B cell (primary cell): ENCODE measurements at regions of chr11 and their contacts with region 1.

Region 1: DNA sequence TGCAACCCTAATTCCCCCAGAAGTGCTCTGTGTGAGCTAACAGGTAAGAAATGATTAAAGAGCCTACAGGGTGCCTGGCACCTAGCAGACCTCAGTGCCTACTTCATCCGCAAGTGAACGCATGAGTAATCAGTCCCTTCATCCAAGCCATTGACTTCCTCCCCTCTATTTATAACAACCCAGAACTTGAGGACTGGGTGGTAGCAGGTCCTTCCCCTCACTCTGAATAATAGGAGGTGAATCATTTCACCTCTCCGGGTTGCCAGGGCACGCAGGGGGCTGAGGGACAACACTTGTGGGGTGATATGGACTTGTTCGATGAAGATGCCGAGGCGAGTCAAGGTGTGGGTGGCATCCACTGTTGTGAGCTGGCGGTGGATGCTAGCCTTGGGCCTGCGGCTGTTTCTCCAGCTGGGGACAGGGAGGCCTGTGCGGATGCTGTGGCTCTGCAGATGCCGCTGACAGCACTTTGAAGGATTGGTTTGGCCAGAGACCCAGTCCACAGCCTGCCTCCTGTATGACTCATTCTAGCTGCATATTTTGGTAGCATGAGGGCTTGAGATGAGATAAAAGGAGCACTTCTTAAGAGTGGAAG is 11.7 kb upstream of the SORL1-AS1 start:
- DNase-seq: peak; percentile 36
- ATAC-seq: peak; percentile 31
- H3K4me3 ChIP-seq: no peak overlapping the region
- H3K4me3 Mint-ChIP-seq: peak overlapping the region; percentile 63
- H3K27ac ChIP-seq: peak overlapping the region in 1 of 2 donors; percentile 8
- H3K27ac Mint-ChIP-seq: peak overlapping the region; percentile 62
- H3K4me1 ChIP-seq: peaks cover 65 to 80% of the 10 kb centered on the region in 2 donors
- H3K4me1 Mint-ChIP-seq: peaks cover 90% of the 10 kb centered on the region
- H3K27me3 ChIP-seq: no peaks in the 10 kb centered on the region
- H3K27me3 Mint-ChIP-seq: no peaks in the 10 kb centered on the region
- CTCF ChIP-seq: no peak

Region 2: DNA sequence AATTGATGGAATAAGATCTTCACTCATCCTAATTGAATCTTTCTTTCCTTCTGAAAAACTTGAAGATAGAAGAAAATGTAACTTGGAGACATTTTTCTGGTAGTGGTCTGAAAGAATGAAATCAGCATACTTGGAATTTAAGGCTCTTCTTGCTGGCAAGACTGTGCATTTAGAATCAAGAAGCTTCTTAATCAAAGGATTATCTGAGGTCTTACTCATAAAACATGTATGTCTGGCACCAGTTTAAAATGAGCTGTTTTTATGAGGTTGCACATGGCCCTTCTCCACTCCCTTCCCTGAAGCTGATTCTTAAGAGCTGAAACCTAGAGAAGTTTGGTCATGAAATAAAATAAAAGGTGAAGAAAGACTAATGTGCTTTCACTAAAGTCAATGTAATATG is 1051.0 kb before region 1 on chr11:
- CTCF ChIA-PET with region 1: no interaction called
- POLR2A ChIA-PET with region 1: no interaction called
- intact Hi-C with region 1: no loop called
- DNase-seq: no peak
- ATAC-seq: no peak
- H3K4me3 ChIP-seq: no peak overlapping the region
- H3K4me3 Mint-ChIP-seq: no peak overlapping the region
- H3K27ac ChIP-seq: no peak overlapping the region
- H3K27ac Mint-ChIP-seq: no peak overlapping the region
- H3K4me1 ChIP-seq: no peaks in the 10 kb centered on the region
- H3K4me1 Mint-ChIP-seq: no peaks in the 10 kb centered on the region
- H3K27me3 ChIP-seq: no peaks in the 10 kb centered on the region
- H3K27me3 Mint-ChIP-seq: no peaks in the 10 kb centered on the region
- CTCF ChIP-seq: no peak

Region 3: GRCh38 chr11:120985718-120986569 is 478.5 kb before region 1 on chr11:
- CTCF ChIA-PET with region 1: no interaction called
- POLR2A ChIA-PET with region 1: no interaction called
- intact Hi-C with region 1: no loop called
- DNase-seq: peak; percentile 41
- ATAC-seq: peak; percentile 65
- H3K4me3 ChIP-seq: peak overlapping the region in 3 of 5 experiments; percentile 25 to 48 (median 40)
- H3K4me3 Mint-ChIP-seq: peak overlapping the region; percentile 63
- H3K27ac ChIP-seq: no peak overlapping the region
- H3K27ac Mint-ChIP-seq: no peak overlapping the region
- H3K4me1 ChIP-seq: peaks cover 7 to 8% of the 10 kb centered on the region in 2 donors
- H3K4me1 Mint-ChIP-seq: peaks cover 10% of the 10 kb centered on the region
- H3K27me3 ChIP-seq: peaks cover 0 to 30% (median 23%) of the 10 kb centered on the region in 4 experiments
- H3K27me3 Mint-ChIP-seq: peaks cover 63% of the 10 kb centered on the region
- CTCF ChIP-seq: no peak

Region 4: DNA sequence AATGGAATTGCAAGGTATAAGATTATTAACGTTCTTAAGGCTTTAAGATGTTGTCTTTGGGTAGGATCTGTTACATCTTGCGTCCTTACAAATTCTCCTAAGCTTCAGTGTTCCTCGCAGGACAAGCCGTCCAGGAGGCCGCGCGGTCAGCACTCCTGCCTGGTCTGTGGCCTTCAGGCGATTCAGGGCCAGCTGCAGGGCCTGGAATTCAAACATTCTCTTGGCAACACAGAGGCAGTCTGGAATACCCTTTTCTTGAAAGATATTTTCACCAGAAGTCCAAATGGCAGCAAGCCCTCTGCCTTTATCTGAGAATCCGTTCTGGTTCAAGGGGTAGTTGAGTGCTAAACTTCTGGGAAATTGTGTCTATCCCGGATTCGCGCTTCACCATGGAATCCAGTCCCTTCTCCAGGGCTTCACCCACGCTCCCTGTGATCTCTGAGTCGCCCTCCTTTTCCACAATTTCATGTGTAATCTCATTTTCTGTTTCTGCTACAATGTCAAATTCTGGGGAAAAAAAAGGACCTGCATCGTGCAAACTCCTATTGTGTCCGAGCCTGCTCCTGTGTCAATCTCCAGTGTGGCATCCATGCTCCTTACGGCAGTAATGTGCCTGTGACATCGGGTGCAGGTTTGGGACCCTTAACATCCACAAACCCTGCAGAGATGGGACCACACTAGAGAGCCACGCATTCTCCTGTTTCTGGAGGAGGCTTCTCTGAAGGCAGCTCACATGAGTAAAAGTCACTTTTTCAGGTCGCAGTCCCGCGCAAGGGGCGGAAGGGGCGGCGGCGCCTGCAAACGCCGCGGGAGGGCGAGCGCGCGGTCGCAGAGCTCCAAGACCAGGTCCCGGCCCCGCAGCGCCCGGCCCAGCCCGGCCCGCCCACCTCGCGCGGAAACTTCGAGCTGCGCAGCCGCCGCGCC is 37.7 kb before region 1 on chr11:
- CTCF ChIA-PET with region 1: interaction called, 7 read pairs
- POLR2A ChIA-PET with region 1: interaction called, 5 read pairs
- intact Hi-C with region 1: loop called (anchors 5 kb)
- DNase-seq: peak; percentile 77
- ATAC-seq: peak; percentile 48
- H3K4me3 ChIP-seq: peak overlapping the region in 4 of 5 experiments; percentile 25 to 54 (median 43)
- H3K4me3 Mint-ChIP-seq: peak overlapping the region; percentile 77
- H3K27ac ChIP-seq: no peak overlapping the region
- H3K27ac Mint-ChIP-seq: peak overlapping the region; percentile 64
- H3K4me1 ChIP-seq: peaks cover 52 to 63% of the 10 kb centered on the region in 2 donors
- H3K4me1 Mint-ChIP-seq: peaks cover 78% of the 10 kb centered on the region
- H3K27me3 ChIP-seq: no peaks in the 10 kb centered on the region
- H3K27me3 Mint-ChIP-seq: no peaks in the 10 kb centered on the region
- CTCF ChIP-seq: peak; percentile 22

Region 5: GRCh38 chr11:121482231-121483129 is 18.0 kb after region 1 on chr11:
- CTCF ChIA-PET with region 1: interaction called, 4 read pairs
- POLR2A ChIA-PET with region 1: no interaction called
- intact Hi-C with region 1: loop called (anchors 2 kb)
- DNase-seq: peak; percentile 77
- ATAC-seq: peak; percentile 89
- H3K4me3 ChIP-seq: peak overlapping the region in 3 of 5 experiments; percentile 1 to 21 (median 17)
- H3K4me3 Mint-ChIP-seq: peak overlapping the region; percentile 73
- H3K27ac ChIP-seq: peak overlapping the region; percentile 79 to 81
- H3K27ac Mint-ChIP-seq: peak overlapping the region; percentile 83
- H3K4me1 ChIP-seq: peaks cover 44 to 50% of the 10 kb centered on the region in 2 donors
- H3K4me1 Mint-ChIP-seq: peaks cover 62% of the 10 kb centered on the region
- H3K27me3 ChIP-seq: no peaks in the 10 kb centered on the region
- H3K27me3 Mint-ChIP-seq: no peaks in the 10 kb centered on the region
- CTCF ChIP-seq: no peak